ENCODE measurements at regions of chr14 and their contacts with region 1.

Region 1: GRCh38 chr14:104976198-104977007 is 1.8 kb downstream of the AHNAK2 start:
- DNase-seq: peak; percentile 91
- H3K4me3 ChIP-seq: no peak overlapping the region
- H3K27ac ChIP-seq: peak overlapping the region in 1 of 4 donors; percentile 19
- H3K4me1 ChIP-seq: peaks cover 58 to 72% (median 67%) of the 10 kb centered on the region in 4 donors
- H3K27me3 ChIP-seq: peaks cover 43% of the 10 kb centered on the region
- CTCF ChIP-seq: peak; percentile 91 to 97 (median 95)
- EP300 ChIP-seq: no peak
- POLR2A ChIP-seq: no peak

Region 2: GRCh38 chr14:104953896-104954656 is 22.3 kb before region 1 on chr14:
- in situ Hi-C with region 1: no loop called
- intact Hi-C with region 1: no loop called
- DNase-seq: no peak
- H3K4me3 ChIP-seq: no peak overlapping the region
- H3K27ac ChIP-seq: no peak overlapping the region
- H3K4me1 ChIP-seq: peaks cover 0 to 6% (median 2%) of the 10 kb centered on the region in 4 donors
- H3K27me3 ChIP-seq: peaks cover 10% of the 10 kb centered on the region
- CTCF ChIP-seq: no peak
- EP300 ChIP-seq: no peak
- POLR2A ChIP-seq: no peak

Region 3: GRCh38 chr14:105020815-105021655 is 44.6 kb after region 1 on chr14 and contains the start of gene CDCA4:
- in situ Hi-C with region 1: no loop called
- intact Hi-C with region 1: loop called (anchors 2 kb)
- DNase-seq: peak; percentile 97
- H3K4me3 ChIP-seq: peak within 1 kb of the TSS; percentile 88 to 100 (median 96)
- H3K27ac ChIP-seq: peak within 1 kb of the TSS; percentile 93 to 98 (median 94)
- H3K4me1 ChIP-seq: peaks cover 13 to 42% (median 35%) of the 10 kb centered on the region in 4 donors
- H3K27me3 ChIP-seq: no peaks in the 10 kb centered on the region
- CTCF ChIP-seq: no peak
- EP300 ChIP-seq: no peak
- POLR2A ChIP-seq: peak; percentile 85
- total RNA-seq, gene CDCA4: 0.80 to 7.5 (median 4.5) TPM

Region 4: DNA sequence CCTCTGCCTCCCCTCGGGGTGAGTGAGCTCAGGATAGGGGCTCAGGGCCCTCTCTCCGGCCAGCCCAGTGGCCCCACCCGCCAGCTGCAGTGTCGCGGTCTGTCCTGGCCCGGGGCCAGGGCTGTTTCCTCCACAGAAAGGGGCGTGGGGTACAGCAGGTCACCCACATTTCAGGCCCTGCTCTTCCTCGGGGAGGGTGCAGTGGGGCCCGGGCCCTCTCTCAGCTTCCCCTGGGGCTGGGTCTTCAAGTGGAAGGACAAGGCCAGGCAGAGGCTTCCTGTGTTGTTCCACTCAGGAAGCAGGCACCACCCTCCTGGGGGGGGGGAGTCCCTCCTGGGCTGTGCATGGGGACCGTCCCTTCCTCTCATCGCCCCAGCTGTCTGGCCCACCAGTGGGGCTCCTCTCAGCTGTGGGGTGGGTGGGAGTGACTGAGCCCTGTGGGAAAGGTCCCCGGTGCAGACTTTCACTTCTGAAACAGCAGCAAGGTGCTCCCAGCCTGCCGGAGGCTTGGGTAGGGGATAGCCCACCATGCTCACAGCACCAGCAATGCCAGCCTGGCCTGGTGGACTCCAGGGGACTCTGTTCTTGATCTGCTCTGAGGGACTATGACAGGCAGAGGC is 85.1 kb after region 1 on chr14:
- in situ Hi-C with region 1: no loop called
- intact Hi-C with region 1: no loop called
- DNase-seq: peak; percentile 62
- H3K4me3 ChIP-seq: peak overlapping the region in 1 of 4 donors; percentile 30
- H3K27ac ChIP-seq: peak overlapping the region; percentile 68 to 75 (median 74)
- H3K4me1 ChIP-seq: peaks cover 0 to 28% (median 7%) of the 10 kb centered on the region in 4 donors
- H3K27me3 ChIP-seq: no peaks in the 10 kb centered on the region
- CTCF ChIP-seq: no peak
- EP300 ChIP-seq: no peak
- POLR2A ChIP-seq: no peak

Measured in transverse colon (tissue), 4 donors.